Activated CD4-positive, alpha-beta T cell treated with anti-CD3 and anti-CD28 coated beads, Interleukin-2, amount 10 ng/mL, durations not matched to agents 24 days and 14 days (primary cell): ENCODE measurements at regions of chr16 and their contacts with region 1.

Region 1: DNA sequence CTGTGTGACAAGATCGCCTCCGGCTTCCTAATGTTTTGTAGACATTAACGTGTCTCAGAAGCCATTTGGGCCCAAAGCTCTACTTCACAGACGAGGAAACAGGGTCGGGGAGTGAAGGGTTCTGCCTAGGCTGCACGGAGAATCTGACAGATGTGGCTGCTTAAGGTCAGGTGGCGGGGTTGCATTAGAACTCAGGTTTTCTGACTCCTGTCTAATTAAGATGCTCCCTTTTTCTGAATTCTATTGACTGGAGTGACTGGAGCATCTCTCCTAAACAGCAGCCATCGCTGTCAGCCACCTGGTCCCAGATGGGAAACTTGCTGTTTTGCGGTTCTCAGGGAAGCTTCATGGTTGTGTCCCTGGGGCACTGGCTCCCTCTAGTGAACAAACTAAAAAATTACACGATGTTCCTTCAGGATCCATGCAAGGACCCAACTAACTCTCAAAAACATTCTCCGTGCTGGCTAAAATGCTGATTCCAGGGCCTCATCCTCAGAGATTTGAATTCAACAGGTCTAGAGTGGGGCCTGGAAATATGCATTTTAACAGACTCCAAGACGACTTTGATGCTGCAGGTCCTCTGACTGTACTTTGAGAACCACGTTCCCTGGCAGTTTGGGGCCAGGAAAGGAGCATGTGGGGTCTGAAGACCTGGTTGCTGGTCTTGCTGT is 117.4 kb downstream of the IRF8 start:
- DNase-seq: peak; percentile 79
- H3K4me3 Mint-ChIP-seq: no peak overlapping the region
- H3K27ac Mint-ChIP-seq: no peak overlapping the region
- H3K4me1 Mint-ChIP-seq: peaks cover 7% of the 10 kb centered on the region
- H3K27me3 Mint-ChIP-seq: peaks cover 23% of the 10 kb centered on the region

Region 2: GRCh38 chr16:85821441-85822135 is 194.7 kb before region 1 on chr16:
- intact Hi-C with region 1: loop called (anchors 1 kb)
- DNase-seq: peak; percentile 94
- H3K4me3 Mint-ChIP-seq: no peak overlapping the region
- H3K27ac Mint-ChIP-seq: no peak overlapping the region
- H3K4me1 Mint-ChIP-seq: peaks cover 7% of the 10 kb centered on the region
- H3K27me3 Mint-ChIP-seq: peaks cover 5% of the 10 kb centered on the region

Region 3: DNA sequence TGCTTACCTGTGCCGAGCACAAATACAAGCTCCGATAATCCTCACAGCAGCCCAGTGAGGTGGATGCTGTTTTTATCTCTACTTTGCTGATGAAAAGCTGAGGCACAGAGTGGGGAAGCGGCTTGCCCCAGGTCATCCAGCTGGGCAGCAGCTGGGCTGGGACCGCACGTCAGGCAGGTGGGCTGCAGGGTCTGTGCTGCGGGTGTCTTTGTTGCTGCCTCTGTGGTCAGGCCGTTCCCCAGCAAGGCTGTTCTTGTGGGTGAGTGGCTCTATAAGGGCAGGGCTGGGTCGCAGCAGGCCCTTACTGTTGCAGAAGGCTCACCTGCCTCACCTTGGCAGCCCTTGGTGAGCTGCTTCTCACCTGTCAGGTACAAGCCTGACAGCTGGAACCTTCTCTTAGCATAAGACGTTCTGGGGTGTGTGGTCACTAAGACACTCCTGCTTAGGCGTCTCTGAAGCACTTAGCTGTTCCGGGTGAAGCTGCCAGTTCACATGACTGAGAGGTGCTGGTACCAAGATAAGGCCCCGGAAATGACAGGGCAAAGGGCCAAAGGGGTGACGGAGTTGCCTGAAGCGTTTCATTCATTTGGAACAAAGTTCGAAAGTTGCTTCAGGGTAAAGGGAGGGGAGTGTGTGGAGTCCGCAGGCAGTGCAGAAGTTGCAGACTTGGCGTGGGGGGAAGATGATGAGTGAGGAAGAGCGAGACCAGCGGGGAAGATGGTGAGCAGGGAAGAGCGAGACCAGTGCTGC is 100.0 kb before region 1 on chr16:
- intact Hi-C with region 1: no loop called
- DNase-seq: no peak
- H3K4me3 Mint-ChIP-seq: no peak overlapping the region
- H3K27ac Mint-ChIP-seq: peak overlapping the region; percentile 67
- H3K4me1 Mint-ChIP-seq: peaks cover 10% of the 10 kb centered on the region
- H3K27me3 Mint-ChIP-seq: no peaks in the 10 kb centered on the region

Region 4: DNA sequence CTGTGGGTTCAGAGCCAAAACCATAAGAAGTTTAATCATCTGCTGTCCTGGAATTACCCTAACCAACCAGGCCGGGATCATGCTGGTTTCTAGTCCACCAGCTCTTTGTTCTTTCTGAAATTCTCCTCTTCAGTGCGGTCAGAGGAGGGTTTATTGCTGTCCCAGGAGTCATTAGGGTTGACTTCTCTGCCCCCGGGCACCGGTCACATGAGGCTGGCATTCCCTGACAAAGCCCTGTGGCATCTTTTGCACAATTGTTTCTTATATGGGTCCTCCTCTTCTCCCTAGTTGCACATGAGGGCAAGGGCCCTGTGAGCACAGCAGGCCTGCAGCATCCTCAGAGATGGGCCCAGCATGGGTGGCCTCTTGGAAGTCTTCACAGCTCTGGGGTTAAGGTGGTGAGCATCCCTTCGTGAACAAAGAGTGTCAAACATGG is 126.5 kb after region 1 on chr16:
- intact Hi-C with region 1: no loop called
- DNase-seq: no peak
- H3K4me3 Mint-ChIP-seq: no peak overlapping the region
- H3K27ac Mint-ChIP-seq: no peak overlapping the region
- H3K4me1 Mint-ChIP-seq: no peaks in the 10 kb centered on the region
- H3K27me3 Mint-ChIP-seq: peaks cover 4% of the 10 kb centered on the region